Activated CD8-positive, alpha-beta T cell treated with anti-CD3 and anti-CD28 coated beads, Interleukin-2, amount 10 ng/mL, durations not matched to agents 7 days and 5 days (primary cell): ENCODE measurements at regions of chr5 and their contacts with region 1.

Region 1: GRCh38 chr5:1008451-1009358 is at the start of gene NKD2:
- DNase-seq: peak; percentile 47
- ATAC-seq: peak; percentile 64
- H3K4me3 Mint-ChIP-seq: peak within 1 kb of the TSS; percentile 17
- H3K27ac Mint-ChIP-seq: no peak within 1 kb of the TSS
- H3K4me1 Mint-ChIP-seq: peaks cover 24% of the 10 kb centered on the region
- H3K27me3 Mint-ChIP-seq: peaks cover 42% of the 10 kb centered on the region
- total RNA-seq, gene NKD2: 1.3 to 3.2 TPM

Region 2: GRCh38 chr5:932628-933250 is 76.0 kb before region 1 on chr5:
- CTCF ChIA-PET with region 1: interaction called, 13 read pairs
- POLR2A ChIA-PET with region 1: no interaction called
- DNase-seq: no peak
- ATAC-seq: no peak
- H3K4me3 Mint-ChIP-seq: no peak overlapping the region
- H3K27ac Mint-ChIP-seq: peak overlapping the region; percentile 37
- H3K4me1 Mint-ChIP-seq: peaks cover 28% of the 10 kb centered on the region
- H3K27me3 Mint-ChIP-seq: peaks cover 13% of the 10 kb centered on the region

Region 3: GRCh38 chr5:997001-997474 is 11.7 kb before region 1 on chr5:
- CTCF ChIA-PET with region 1: interaction called, 17 read pairs
- POLR2A ChIA-PET with region 1: no interaction called
- DNase-seq: peak; percentile 71
- ATAC-seq: peak; percentile 90
- H3K4me3 Mint-ChIP-seq: peak overlapping the region; percentile 71
- H3K27ac Mint-ChIP-seq: peak overlapping the region; percentile 83
- H3K4me1 Mint-ChIP-seq: peaks cover 31% of the 10 kb centered on the region
- H3K27me3 Mint-ChIP-seq: peaks cover 7% of the 10 kb centered on the region

Region 4: GRCh38 chr5:1050423-1051365 is 42.0 kb after region 1 on chr5:
- CTCF ChIA-PET with region 1: no interaction called
- POLR2A ChIA-PET with region 1: no interaction called
- DNase-seq: no peak
- ATAC-seq: peak; percentile 24
- H3K4me3 Mint-ChIP-seq: no peak overlapping the region
- H3K27ac Mint-ChIP-seq: peak overlapping the region; percentile 21
- H3K4me1 Mint-ChIP-seq: no peaks in the 10 kb centered on the region
- H3K27me3 Mint-ChIP-seq: no peaks in the 10 kb centered on the region

Region 5: GRCh38 chr5:1062761-1063568 is 54.3 kb after region 1 on chr5:
- CTCF ChIA-PET with region 1: no interaction called
- POLR2A ChIA-PET with region 1: no interaction called
- DNase-seq: no peak
- ATAC-seq: no peak
- H3K4me3 Mint-ChIP-seq: no peak overlapping the region
- H3K27ac Mint-ChIP-seq: no peak overlapping the region
- H3K4me1 Mint-ChIP-seq: no peaks in the 10 kb centered on the region
- H3K27me3 Mint-ChIP-seq: no peaks in the 10 kb centered on the region